Caco-2 (cell line): ENCODE measurements at regions of chr1 and their contacts with region 1.

Region 1: DNA sequence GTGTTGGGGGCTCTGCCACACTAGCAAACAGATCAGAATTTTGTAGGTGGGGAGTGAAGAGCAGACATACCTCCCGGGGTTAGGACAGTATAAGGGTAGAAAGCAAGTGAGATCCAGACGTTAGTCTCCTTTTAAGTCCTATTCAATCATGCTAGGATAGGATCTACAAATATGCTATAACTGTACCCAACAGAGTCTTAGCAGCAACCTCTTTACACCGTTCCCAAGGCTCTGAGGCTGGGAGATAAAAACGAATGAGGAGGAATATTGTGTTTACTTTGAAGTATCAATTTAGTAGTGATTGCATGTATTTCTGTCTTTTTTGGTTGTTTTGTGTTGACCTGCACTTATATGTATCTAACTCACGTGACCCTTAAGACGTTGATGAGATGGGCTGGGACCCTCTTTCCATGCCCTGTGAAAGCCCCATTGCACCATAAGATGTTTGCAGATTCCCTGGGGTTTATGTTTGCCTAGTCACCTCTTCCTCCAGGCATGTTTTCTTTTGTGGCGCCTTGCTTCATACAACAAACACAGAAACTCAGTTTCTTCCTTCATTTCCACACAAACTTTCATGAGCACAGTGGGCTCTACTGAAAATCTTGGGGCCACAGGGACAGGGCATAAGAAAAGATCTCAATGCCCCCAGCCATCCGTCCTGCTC is 82.0 kb downstream of the ZC3H11B start:
- DNase-seq: no peak
- H3K4me3 ChIP-seq: no peak overlapping the region
- H3K4me3 Mint-ChIP-seq: no peak overlapping the region
- H3K27ac Mint-ChIP-seq: no peak overlapping the region
- H3K4me1 ChIP-seq: peaks cover 10% of the 10 kb centered on the region; the same call in 1 of the 2 replicates
- H3K4me1 Mint-ChIP-seq: peaks cover 8% of the 10 kb centered on the region
- H3K27me3 ChIP-seq: no peaks in the 10 kb centered on the region
- H3K27me3 Mint-ChIP-seq: no peaks in the 10 kb centered on the region
- CTCF ChIP-seq: no peak

Region 2: GRCh38 chr1:219559899-219560298 is 29.0 kb after region 1 on chr1:
- CTCF ChIA-PET with region 1: no interaction called
- POLR2A ChIA-PET with region 1: no interaction called
- intact Hi-C with region 1: loop called (anchors 1 kb)
- DNase-seq: no peak
- H3K4me3 ChIP-seq: no peak overlapping the region
- H3K4me3 Mint-ChIP-seq: no peak overlapping the region
- H3K27ac Mint-ChIP-seq: no peak overlapping the region
- H3K4me1 ChIP-seq: peaks cover 8% of the 10 kb centered on the region
- H3K4me1 Mint-ChIP-seq: no peaks in the 10 kb centered on the region
- H3K27me3 ChIP-seq: no peaks in the 10 kb centered on the region
- H3K27me3 Mint-ChIP-seq: no peaks in the 10 kb centered on the region
- CTCF ChIP-seq: no peak